Dendritic cell treated with granulocyte-macrophage colony-stimulating factor and Interleukin-4, amounts not matched to agents 40 ng/mL and 50 ng/mL, for 4 days (primary cell): ENCODE measurements at regions of chr4 and their contacts with region 1.

Region 1: DNA sequence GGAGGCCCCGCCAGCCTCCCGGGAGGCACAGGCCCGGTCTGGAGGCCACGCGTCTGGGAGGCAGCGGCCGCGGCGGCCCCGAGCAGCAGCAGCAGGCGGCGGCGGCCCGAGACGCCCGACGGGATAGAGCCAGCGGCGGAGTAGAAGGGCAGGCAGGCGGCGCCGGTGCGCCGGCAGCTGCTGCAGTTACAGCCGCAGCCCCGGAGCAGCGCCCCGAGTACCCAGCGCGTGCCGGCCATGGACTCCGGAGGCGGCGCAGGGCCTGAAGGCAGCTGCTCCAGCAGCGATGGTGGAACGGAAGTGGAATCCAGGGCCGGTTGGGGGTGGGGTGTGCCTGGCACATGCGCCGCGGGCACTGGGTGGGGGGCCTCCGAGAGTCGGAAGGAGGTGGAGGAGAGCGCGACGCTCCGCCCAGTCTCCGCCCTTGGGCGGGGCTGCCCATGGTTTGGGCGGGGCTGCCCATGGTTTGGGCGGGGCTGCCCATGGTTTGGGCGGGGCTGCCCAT is at the start of gene GRSF1:
- H3K4me3 Mint-ChIP-seq: peak within 1 kb of the TSS; percentile 87
- H3K27ac Mint-ChIP-seq: peak within 1 kb of the TSS; percentile 94
- H3K4me1 Mint-ChIP-seq: peaks cover 15% of the 10 kb centered on the region
- H3K27me3 Mint-ChIP-seq: no peaks in the 10 kb centered on the region

Region 2: DNA sequence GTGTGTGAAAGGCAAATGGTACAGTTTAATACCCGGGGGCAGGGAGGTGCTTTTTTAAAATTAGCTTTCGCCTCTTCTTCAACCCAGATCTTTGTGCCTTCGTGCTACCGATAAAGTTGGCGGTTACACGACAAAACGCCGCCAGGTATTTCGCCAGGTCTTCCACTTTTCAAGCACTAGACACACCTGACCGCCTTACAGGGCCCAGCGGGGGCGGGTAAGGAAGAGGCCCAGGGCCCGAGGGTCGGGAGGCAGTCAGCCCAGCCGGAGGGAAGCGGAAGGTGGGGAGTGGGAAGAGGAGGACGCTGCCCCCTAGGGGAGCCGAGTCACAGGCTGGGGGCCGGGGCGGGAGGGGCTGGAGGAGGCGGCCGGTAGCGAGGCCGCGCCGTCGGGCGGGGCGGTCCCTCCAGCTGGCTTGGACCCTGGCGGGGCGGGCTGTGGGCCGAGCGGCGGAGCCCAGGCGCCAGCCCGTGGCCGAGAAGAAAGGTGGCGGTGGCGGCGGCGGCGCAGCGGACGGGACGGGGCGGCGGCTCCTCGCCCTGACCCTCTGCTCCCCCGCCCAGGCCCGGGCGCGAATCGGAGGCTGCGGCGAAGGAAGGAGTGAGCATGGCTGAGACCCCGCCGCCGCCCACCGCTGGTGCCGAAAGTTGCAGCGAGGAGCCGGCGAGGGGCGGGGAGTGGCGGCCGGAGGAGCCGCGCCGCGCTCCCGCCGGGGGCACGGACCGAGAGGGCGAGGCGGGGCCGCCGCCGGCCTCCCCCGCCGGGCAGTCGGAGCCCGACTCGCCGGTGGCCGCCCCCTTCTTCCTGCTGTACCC is 135.1 kb before region 1 on chr4:
- intact Hi-C with region 1: loop called (anchors 5 kb)
- H3K4me3 Mint-ChIP-seq: peak overlapping the region; percentile 86
- H3K27ac Mint-ChIP-seq: peak overlapping the region; percentile 92
- H3K4me1 Mint-ChIP-seq: peaks cover 16% of the 10 kb centered on the region
- H3K27me3 Mint-ChIP-seq: no peaks in the 10 kb centered on the region

Region 3: GRCh38 chr4:70749313-70749712 is 90.3 kb before region 1 on chr4:
- intact Hi-C with region 1: no loop called
- H3K4me3 Mint-ChIP-seq: no peak overlapping the region
- H3K27ac Mint-ChIP-seq: no peak overlapping the region
- H3K4me1 Mint-ChIP-seq: peaks cover 39% of the 10 kb centered on the region
- H3K27me3 Mint-ChIP-seq: no peaks in the 10 kb centered on the region

Region 4: DNA sequence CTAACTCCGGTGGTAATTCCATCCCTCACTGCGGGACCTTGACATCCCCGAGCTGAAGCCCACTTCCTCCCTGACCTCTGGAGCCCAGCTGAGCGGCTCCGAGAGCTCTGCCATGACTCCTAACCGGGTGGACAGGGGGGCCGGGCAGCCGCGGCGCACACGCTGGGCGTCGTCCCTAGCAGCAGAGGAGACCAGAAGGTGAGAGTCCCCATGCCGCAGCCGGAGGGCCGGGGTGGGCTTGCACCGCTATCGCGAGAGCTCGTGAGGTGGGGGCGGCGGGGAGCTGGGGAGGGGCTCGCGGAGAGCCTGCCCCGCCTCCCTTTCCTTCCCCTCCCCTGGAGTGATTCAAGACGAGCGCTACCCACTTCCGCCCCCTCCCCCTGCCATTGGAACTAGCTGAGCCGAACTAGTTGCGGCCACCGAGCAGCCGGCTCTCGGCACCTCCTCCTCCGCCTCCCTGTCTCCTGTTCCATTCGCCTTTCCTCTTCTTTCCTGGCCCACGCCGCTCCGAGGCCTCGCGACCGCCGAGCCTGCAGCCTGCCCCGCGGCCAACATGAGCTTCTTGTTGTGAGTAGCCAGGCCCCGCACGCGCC is 62.4 kb after region 1 on chr4 and contains the start of gene MOB1B:
- intact Hi-C with region 1: loop called (anchors 2 kb)
- H3K4me3 Mint-ChIP-seq: peak within 1 kb of the TSS; percentile 99
- H3K27ac Mint-ChIP-seq: peak within 1 kb of the TSS; percentile 89
- H3K4me1 Mint-ChIP-seq: peaks cover 47% of the 10 kb centered on the region
- H3K27me3 Mint-ChIP-seq: no peaks in the 10 kb centered on the region

Region 5: DNA sequence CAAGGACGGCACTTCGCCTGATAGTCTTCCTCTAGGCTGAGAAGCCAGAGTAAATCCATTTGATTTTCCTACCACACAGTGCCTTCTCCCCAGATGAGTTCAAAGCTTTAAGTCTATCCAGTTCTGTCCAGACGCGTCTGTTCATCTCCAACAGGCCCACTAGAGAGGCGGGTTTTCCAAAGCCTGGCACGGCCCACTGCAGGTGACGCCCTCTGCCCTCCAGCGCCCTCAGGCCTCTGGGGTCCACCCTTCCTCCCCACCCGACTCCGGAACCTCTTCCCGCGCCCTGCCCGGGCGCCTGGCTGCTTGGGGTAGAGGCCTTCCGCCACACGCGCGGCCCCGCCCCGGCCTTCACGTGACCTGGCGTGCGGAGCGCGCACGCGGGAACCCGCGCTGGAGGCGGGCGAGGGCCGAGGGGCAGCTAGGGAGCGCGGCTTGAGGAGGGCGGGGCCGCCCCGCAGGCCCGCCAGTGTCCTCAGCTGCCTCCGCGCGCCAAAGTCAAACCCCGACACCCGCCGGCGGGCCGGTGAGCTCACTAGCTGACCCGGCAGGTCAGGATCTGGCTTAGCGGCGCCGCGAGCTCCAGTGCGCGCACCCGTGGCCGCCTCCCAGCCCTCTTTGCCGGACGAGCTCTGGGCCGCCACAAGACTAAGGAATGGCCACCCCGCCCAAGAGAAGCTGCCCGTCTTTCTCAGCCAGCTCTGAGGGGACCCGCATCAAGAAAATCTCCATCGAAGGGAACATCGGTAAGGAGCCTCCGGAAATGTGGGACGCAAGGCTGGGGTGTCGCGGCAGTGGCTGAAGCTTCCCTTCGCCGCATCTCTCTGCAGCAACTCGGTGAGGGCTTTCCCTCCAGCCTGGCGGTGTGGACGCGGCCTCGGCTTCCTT is 153.8 kb after region 1 on chr4 and contains the start of gene DCK:
- intact Hi-C with region 1: loop called (anchors 5 kb)
- H3K4me3 Mint-ChIP-seq: peak within 1 kb of the TSS; percentile 97
- H3K27ac Mint-ChIP-seq: peak within 1 kb of the TSS; percentile 90
- H3K4me1 Mint-ChIP-seq: peaks cover 34% of the 10 kb centered on the region
- H3K27me3 Mint-ChIP-seq: no peaks in the 10 kb centered on the region